H1 (cell line): ENCODE measurements at regions of chr11 and their contacts with region 1.

Region 1: DNA sequence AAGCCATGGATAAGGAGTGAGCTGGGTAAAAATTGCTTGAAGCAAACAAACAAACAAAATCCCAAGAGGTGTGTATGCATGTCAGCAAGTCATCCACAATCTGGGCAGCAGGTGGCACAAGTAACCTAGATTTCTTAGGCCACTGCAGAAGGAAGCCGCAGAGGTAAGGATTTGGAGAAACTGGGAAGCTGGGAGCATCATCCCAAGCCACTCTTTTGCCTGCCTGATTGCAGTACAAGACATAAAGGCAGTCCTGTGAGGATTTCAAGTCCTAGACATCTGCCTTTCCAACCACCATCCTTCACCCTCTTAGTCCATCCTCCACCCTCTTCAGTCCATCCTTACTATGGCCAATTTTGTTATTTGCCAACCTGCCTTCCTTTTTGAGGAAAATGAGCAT is 67.2 kb upstream of the BMAL1 start:
- DNase-seq: peak; percentile 53 to 67
- H3K4me3 ChIP-seq: no peak overlapping the region
- H3K27ac ChIP-seq: no peak overlapping the region
- H3K4me1 ChIP-seq: peaks cover 2 to 10% (median 6%) of the 10 kb centered on the region in 4 experiments; a peak in 6 of 7 replicates
- H3K27me3 ChIP-seq: peaks cover 0 to 1% (median 0%) of the 10 kb centered on the region in 4 experiments; a peak in 1 of 7 replicates
- CTCF ChIP-seq: peak; percentile 29 to 91 (median 87)
- EP300 ChIP-seq: no peak
- POLR2A ChIP-seq: no peak
- RAD21 ChIP-seq: peak; percentile 93 to 97

Region 2: DNA sequence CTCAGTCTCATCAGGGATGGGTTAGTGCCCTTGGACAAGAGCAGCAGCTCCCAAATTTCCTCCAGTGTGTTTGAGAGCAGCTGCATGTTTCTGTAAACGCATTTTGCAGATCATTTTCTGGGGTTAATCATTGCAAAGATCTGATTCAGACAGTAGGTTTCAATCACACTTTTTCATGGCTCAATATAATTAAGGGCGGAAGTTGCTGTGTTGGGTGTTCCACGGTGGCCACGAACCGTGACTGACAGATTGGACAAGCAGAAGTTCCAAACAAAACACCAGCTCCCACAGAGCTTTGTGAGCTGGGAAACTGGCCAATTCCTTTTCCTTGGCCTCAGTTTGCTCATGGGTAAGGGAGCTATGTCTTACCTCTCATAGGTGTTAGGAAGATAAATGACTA is 209.7 kb before region 1 on chr11:
- CTCF ChIA-PET with region 1: no interaction called
- POLR2A ChIA-PET with region 1: no interaction called
- DNase-seq: no peak
- H3K4me3 ChIP-seq: no peak overlapping the region
- H3K27ac ChIP-seq: no peak overlapping the region
- H3K4me1 ChIP-seq: peaks cover 0 to 9% (median 1%) of the 10 kb centered on the region in 4 experiments; a peak in 4 of 7 replicates
- H3K27me3 ChIP-seq: peaks cover 0 to 1% (median 0%) of the 10 kb centered on the region in 4 experiments; a peak in 1 of 7 replicates
- CTCF ChIP-seq: no peak
- EP300 ChIP-seq: no peak
- POLR2A ChIP-seq: no peak
- RAD21 ChIP-seq: no peak

Region 3: DNA sequence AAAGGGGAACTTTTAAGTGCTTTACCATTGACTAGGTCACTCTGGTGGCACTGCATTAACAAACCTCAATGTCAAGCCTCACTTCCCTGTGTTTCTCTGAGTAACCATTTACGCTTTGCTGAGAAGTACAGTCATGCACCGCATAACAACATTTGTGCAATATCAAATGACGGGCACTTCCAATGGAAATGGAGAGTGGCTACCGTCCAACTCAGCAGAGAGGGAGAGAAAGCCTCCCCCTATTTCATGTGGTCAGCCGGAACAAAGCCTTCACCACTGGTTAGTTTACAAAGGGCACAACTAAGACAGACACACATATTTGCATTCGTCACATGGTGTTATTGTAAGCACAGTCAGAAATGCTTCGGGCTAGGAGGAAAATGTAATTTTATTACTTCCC is 84.0 kb before region 1 on chr11:
- CTCF ChIA-PET with region 1: no interaction called
- POLR2A ChIA-PET with region 1: no interaction called
- DNase-seq: no peak
- H3K4me3 ChIP-seq: no peak overlapping the region
- H3K27ac ChIP-seq: no peak overlapping the region
- H3K4me1 ChIP-seq: no peaks in the 10 kb centered on the region
- H3K27me3 ChIP-seq: no peaks in the 10 kb centered on the region
- CTCF ChIP-seq: no peak
- EP300 ChIP-seq: no peak
- POLR2A ChIP-seq: no peak
- RAD21 ChIP-seq: no peak

Region 4: DNA sequence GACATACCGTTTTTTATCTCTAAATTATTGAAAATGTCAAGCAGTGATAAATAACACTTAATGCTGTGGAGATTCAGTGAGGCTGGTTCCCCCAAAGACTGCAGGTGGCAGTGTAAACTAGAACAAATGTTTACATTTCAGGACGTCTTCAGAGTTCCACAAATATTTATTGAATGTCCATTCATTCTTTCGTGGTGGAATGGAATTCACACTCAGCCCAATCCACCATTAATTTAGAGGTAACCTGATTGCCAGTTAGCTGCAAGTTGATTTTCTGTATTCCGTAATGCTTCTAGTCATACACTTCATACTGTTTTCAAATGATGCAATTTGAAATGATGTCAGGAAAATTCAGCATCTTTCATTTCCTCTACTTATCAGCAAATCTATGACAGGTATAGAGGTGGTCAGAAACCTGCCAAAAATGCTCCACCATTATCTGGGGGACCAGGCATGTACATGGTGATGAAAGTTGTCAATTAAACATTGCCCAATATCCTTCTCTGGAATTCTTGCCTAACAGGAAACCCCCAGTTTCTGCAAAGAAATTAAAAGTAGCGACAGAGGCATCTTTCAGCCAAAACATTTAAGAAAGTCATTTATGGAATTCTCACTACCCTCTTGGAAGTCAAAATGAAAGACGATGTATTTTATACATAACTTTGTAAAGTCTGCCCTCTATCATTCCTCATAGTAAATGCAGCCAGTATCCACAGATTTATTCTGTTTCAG is 27.2 kb before region 1 on chr11:
- CTCF ChIA-PET with region 1: interaction called, 11 read pairs
- POLR2A ChIA-PET with region 1: no interaction called
- DNase-seq: no peak
- H3K4me3 ChIP-seq: no peak overlapping the region
- H3K27ac ChIP-seq: no peak overlapping the region
- H3K4me1 ChIP-seq: no peaks in the 10 kb centered on the region
- H3K27me3 ChIP-seq: no peaks in the 10 kb centered on the region
- CTCF ChIP-seq: peak in 2 of 3 experiments; percentile 20 to 45; a peak in 2 of 4 replicates
- EP300 ChIP-seq: no peak
- POLR2A ChIP-seq: no peak
- RAD21 ChIP-seq: peak; percentile 50 to 60

Region 5: DNA sequence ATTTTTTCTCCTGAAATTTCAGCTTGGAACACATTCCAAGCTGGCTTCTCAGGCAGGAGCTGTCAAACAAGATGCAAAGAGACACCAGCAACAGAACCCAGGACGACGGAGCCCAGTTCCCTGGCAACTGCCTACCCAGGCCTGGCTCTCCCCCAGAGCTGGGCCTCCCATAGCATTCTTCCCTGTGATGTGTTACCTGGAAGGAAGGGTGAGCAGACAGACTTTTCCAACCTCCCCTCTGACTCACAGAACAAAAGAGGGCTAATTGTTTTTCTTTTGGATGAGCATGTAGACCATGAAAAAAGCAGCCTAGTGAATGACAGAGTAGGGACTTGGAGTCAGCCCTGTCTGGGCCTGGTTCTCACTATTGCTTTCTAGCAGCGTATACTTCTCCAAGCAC is 11.9 kb after region 1 on chr11:
- CTCF ChIA-PET with region 1: interaction called, 95 read pairs
- POLR2A ChIA-PET with region 1: interaction called, 3 read pairs
- DNase-seq: peak in 1 of 2 experiments; percentile 33
- H3K4me3 ChIP-seq: no peak overlapping the region
- H3K27ac ChIP-seq: no peak overlapping the region
- H3K4me1 ChIP-seq: no peaks in the 10 kb centered on the region
- H3K27me3 ChIP-seq: no peaks in the 10 kb centered on the region
- CTCF ChIP-seq: no peak
- EP300 ChIP-seq: no peak
- POLR2A ChIP-seq: no peak
- RAD21 ChIP-seq: no peak

Region 6: GRCh38 chr11:13238879-13239514 is 28.6 kb after region 1 on chr11:
- CTCF ChIA-PET with region 1: interaction called, 86 read pairs
- POLR2A ChIA-PET with region 1: no interaction called
- DNase-seq: peak in 1 of 2 experiments; percentile 68
- H3K4me3 ChIP-seq: no peak overlapping the region
- H3K27ac ChIP-seq: no peak overlapping the region
- H3K4me1 ChIP-seq: no peaks in the 10 kb centered on the region
- H3K27me3 ChIP-seq: no peaks in the 10 kb centered on the region
- CTCF ChIP-seq: peak; percentile 52 to 68 (median 67)
- EP300 ChIP-seq: no peak
- POLR2A ChIP-seq: no peak
- RAD21 ChIP-seq: peak; percentile 58 to 62

Region 7: GRCh38 chr11:13297917-13298356 is 87.5 kb after region 1 on chr11:
- CTCF ChIA-PET with region 1: interaction called, 10 read pairs
- POLR2A ChIA-PET with region 1: no interaction called
- DNase-seq: no peak
- H3K4me3 ChIP-seq: no peak overlapping the region
- H3K27ac ChIP-seq: no peak overlapping the region
- H3K4me1 ChIP-seq: no peaks in the 10 kb centered on the region
- H3K27me3 ChIP-seq: no peaks in the 10 kb centered on the region
- CTCF ChIP-seq: no peak
- EP300 ChIP-seq: no peak
- POLR2A ChIP-seq: no peak
- RAD21 ChIP-seq: no peak

Region 8: DNA sequence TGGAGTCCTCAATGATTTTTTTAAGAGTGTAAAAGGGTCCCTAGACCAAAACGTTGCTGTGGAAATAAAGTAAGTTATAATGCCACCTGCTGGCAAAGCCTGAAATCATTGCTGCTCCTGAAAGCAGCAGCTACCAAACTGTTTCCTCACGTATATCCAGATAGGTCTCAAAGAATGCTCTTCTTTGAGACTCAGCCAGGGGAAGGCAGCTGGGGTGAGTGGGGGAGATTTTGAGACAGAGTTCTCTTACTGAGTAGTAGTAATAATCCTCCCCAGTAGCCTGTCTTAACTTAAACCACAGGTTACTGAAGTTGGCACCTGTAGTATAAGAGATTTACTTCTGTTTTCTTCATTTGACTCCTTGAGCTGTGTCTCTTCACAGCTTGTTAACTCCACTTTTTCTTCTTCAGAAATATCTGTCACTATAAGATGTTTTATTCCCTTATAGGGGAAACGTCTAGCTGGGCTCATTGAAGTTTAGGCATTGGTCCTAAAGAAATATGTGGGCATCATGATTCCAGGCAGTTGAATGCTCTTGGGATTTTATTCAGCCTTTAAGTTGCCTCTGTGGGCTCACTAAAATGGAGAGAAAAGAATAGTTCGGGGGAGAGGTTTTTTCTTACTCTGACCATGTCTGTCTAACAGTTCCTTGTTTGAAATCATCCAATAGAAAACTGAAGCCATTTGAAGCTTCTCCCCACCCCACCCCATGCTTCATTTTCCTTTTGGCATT is 174.7 kb after region 1 on chr11:
- CTCF ChIA-PET with region 1: interaction called, 11 read pairs
- POLR2A ChIA-PET with region 1: no interaction called
- DNase-seq: peak; percentile 15 to 58
- H3K4me3 ChIP-seq: no peak overlapping the region
- H3K27ac ChIP-seq: no peak overlapping the region
- H3K4me1 ChIP-seq: no peaks in the 10 kb centered on the region
- H3K27me3 ChIP-seq: no peaks in the 10 kb centered on the region
- CTCF ChIP-seq: peak in 2 of 3 experiments; percentile 58 to 68; a peak in 3 of 4 replicates
- EP300 ChIP-seq: no peak
- POLR2A ChIP-seq: no peak
- RAD21 ChIP-seq: peak; percentile 59 to 67